ENCODE measurements at regions of chr19 and their contacts with region 1.

Region 1: DNA sequence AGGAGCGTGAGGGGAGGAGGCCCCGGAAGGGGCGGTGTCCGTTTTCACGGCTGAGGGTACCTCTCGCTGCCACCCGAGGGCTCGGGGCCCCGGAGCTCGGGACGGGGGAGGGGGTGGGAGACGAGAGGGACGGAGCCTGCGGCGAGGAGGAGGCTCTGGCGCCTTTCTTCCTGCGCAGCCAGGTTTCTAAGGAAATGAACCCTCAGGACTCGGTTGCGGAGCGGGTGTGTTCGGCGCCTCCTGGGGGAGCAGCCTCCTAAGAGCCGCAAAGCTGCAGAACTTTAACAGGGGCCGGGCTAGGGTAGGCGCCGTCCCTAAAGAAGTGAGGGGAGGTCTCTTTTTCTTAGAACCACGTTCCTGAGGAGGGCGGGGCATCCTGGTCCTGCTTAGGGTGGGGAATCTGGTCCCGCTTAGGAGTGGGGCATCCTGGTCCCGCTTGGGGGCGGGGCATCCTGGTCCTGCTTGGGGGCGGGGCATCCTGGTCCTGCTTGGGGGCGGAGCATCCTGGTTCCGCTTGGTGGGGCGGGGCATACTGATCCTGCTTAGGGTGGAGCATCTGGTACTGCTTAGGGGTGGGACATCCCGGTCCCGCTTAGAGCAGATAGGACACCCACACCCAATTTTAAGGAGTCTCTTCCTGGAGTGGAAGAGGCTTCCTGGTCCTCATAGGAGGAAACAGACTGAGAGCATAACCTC is 6.2 kb downstream of the SYT5 start:
- DNase-seq: no peak
- H3K4me3 ChIP-seq: peak overlapping the region in 1 of 2 donors; percentile 11
- H3K4me3 Mint-ChIP-seq: peak overlapping the region in 7 of 8 donors; percentile 52 to 75 (median 64)
- H3K27ac ChIP-seq: no peak overlapping the region
- H3K27ac Mint-ChIP-seq: no peak overlapping the region
- H3K4me1 ChIP-seq: peaks cover 20% of the 10 kb centered on the region
- H3K4me1 Mint-ChIP-seq: peaks cover 5 to 40% (median 18%) of the 10 kb centered on the region in 4 donors
- H3K27me3 ChIP-seq: peaks cover 42% of the 10 kb centered on the region
- H3K27me3 Mint-ChIP-seq: peaks cover 55 to 64% of the 10 kb centered on the region in 2 donors

Region 2: GRCh38 chr19:55160128-55160985 is 13.5 kb before region 1 on chr19:
- CTCF ChIA-PET with region 1: interaction called, 10 read pairs
- POLR2A ChIA-PET with region 1: no interaction called
- intact Hi-C with region 1: no loop called
- DNase-seq: peak; percentile 82 to 87 (median 85)
- H3K4me3 ChIP-seq: no peak overlapping the region
- H3K4me3 Mint-ChIP-seq: peak overlapping the region in 1 of 8 donors; percentile 26
- H3K27ac ChIP-seq: no peak overlapping the region
- H3K27ac Mint-ChIP-seq: peak overlapping the region in 5 of 7 donors; percentile 36 to 75 (median 46)
- H3K4me1 ChIP-seq: peaks cover 9% of the 10 kb centered on the region
- H3K4me1 Mint-ChIP-seq: peaks cover 3 to 10% (median 7%) of the 10 kb centered on the region in 4 donors
- H3K27me3 ChIP-seq: peaks cover 6% of the 10 kb centered on the region
- H3K27me3 Mint-ChIP-seq: peaks cover 24 to 36% of the 10 kb centered on the region in 2 donors

Region 3: DNA sequence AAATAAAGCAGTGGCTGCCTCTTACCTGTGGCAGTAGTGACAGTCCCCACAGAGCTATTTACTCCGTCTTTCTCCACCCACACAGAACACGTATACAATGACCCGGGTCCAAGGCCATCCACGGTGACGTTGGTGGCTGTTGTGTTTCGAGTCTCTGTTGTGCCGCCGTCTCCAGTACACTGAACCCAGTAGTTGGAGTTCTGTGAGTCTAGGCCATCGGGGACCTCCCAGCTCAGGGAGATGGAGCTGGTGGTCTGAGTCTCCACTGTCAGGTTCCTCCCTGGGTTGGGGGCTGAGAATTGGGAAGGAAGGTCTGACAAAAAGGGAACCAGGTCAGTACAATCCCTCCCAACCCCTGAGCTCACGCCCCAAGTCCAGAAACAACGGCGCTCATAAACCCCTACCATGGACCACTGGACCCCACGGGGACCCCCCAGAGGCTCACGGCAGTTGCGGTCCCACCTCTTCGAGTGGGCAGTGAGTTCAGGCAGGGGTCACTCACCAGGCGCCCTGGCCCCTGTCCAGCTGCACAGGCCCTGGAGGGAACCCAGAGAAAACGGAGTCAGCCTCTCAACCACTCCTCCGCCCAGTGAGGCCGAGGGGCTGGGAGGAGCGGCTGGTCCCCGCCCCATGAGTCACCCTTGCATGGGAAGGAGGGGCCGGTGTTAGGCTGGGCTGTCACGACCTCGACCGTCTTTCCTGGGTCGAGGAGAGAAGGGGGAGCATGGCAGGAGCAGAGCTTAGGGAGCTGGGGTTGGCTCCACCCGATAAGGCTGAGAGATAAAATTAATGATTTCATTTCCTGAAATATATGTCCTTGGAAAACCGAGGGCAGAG is 33.0 kb after region 1 on chr19:
- CTCF ChIA-PET with region 1: no interaction called
- POLR2A ChIA-PET with region 1: no interaction called
- intact Hi-C with region 1: no loop called
- DNase-seq: no peak
- H3K4me3 ChIP-seq: no peak overlapping the region
- H3K4me3 Mint-ChIP-seq: no peak overlapping the region
- H3K27ac ChIP-seq: no peak overlapping the region
- H3K27ac Mint-ChIP-seq: peak overlapping the region in 3 of 7 donors; percentile 57 to 60 (median 59)
- H3K4me1 ChIP-seq: no peaks in the 10 kb centered on the region
- H3K4me1 Mint-ChIP-seq: peaks cover 0 to 2% (median 0%) of the 10 kb centered on the region in 4 donors
- H3K27me3 ChIP-seq: peaks cover 8% of the 10 kb centered on the region
- H3K27me3 Mint-ChIP-seq: peaks cover 13 to 25% of the 10 kb centered on the region in 2 donors